ENCODE measurements at regions of chr17 and their contacts with region 1.

Region 1: GRCh38 chr17:51260125-51260880 is at the start of gene UTP18:
- H3K4me3 Mint-ChIP-seq: peak within 1 kb of the TSS; percentile 89
- H3K27ac Mint-ChIP-seq: peak within 1 kb of the TSS; percentile 97
- H3K4me1 Mint-ChIP-seq: peaks cover 49% of the 10 kb centered on the region
- H3K27me3 Mint-ChIP-seq: no peaks in the 10 kb centered on the region

Region 2: GRCh38 chr17:51166197-51166986 is 93.9 kb before region 1 on chr17 and contains the start of gene NME2:
- intact Hi-C with region 1: loop called (anchors 1 kb)
- H3K4me3 Mint-ChIP-seq: peak within 1 kb of the TSS; percentile 85
- H3K27ac Mint-ChIP-seq: peak within 1 kb of the TSS; percentile 99
- H3K4me1 Mint-ChIP-seq: peaks cover 53% of the 10 kb centered on the region
- H3K27me3 Mint-ChIP-seq: no peaks in the 10 kb centered on the region

Region 3: DNA sequence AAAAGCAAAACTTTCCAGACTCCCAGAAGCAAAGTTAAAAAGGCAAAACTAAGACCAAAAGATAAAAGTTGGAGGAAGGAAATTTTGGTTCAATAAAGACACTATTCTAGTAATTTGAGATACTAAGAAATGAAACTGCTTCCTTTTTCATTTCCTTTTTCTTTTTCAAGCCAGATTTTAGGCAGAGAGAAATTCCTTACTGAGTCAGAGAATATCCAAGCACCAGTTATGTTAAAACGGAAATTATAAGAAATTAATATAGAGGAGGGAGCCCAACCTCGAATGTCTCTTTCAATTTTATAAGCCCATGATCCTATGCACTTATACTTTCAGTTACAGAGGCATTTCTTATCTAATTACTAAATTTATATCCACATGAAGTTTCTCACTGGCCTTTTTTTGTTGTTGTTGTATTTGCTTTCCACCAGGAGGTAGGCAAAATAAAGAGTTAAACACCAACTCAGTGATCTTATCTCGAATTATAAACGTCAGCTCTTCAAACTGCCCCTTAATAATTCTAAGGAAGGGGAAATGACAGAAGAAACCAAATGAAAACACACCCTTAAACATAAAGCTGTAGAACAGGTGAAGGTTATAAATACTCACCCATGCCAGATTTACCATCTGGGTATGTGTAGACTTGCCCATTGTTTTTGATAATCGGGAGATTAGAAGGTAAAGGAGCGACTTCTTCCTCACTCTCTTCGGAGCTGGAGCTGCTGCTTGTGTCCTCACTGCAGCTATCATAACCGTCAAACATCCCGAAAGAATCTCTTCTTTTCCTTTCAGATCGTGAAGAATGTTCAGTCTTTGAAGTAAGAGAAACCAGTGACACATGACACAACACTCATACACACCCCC is 35.7 kb before region 1 on chr17:
- intact Hi-C with region 1: loop called (anchors 2 kb)
- H3K4me3 Mint-ChIP-seq: no peak overlapping the region
- H3K27ac Mint-ChIP-seq: peak overlapping the region; percentile 65
- H3K4me1 Mint-ChIP-seq: peaks cover 36% of the 10 kb centered on the region
- H3K27me3 Mint-ChIP-seq: no peaks in the 10 kb centered on the region